Dendritic cell treated with granulocyte-macrophage colony-stimulating factor and Interleukin-4, amounts not matched to agents 40 ng/mL and 50 ng/mL, for 4 days (primary cell): ENCODE measurements at regions of chr3 and their contacts with region 1.

Region 1: DNA sequence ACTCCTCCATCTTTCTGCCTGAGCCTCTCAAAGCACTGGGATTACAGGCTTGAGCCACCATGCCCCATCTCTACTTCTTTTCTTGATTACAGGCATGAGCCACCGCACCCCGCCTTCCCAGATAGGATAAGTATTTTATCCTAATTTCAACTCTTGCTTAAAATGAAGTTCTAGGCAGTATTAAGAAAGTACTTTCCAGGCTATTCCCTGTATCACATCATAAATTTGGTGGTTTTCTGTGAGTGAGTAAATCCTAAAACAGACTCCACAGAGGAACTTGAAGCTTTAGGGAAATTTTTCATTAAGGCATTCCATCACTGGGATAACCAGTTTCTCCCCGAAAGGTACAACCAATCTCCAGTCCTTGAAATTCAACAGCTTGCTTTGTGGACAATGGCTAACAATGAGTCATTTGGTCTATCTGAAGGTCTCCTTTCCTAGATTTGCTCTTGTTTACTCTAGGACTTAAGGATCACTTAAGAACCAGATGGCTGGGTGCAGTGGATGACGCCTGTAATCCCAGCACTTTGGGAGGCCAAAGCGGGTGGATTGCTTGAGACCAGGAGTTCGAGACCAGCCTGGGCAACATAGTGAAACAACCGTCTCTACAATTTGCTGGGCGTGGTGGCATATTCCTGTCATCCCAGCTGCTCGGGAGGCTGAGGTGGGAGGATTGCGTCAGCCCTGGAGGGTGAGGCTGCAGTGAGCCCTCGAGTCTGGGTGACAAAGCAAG is 49.7 kb upstream of the SKIL start:
- H3K4me3 Mint-ChIP-seq: no peak overlapping the region
- H3K27ac Mint-ChIP-seq: no peak overlapping the region
- H3K4me1 Mint-ChIP-seq: peaks cover 5% of the 10 kb centered on the region
- H3K27me3 Mint-ChIP-seq: no peaks in the 10 kb centered on the region

Region 2: DNA sequence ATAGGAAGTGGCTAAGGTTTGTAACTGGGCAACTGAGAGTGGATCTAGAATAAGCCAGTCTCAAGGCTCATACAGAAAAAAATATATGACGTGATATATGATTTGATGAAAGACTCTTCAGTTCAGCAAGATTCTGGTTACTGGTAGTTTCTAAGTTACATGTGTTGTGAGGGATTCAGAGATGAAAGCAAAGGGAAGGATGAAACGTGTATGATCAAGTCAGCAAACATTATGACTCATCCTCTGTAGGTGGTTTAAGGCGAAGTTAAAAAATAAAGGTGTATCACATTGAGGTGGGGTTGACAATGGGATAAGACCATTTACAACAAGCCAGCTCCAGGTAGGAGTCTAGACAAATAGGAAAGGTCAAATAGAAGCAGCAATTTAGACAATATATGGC is 559.2 kb before region 1 on chr3:
- intact Hi-C with region 1: no loop called
- H3K4me3 Mint-ChIP-seq: no peak overlapping the region
- H3K27ac Mint-ChIP-seq: no peak overlapping the region
- H3K4me1 Mint-ChIP-seq: no peaks in the 10 kb centered on the region
- H3K27me3 Mint-ChIP-seq: peaks cover 10% of the 10 kb centered on the region

Region 3: GRCh38 chr3:170144437-170144843 is 163.4 kb before region 1 on chr3:
- intact Hi-C with region 1: no loop called
- H3K4me3 Mint-ChIP-seq: no peak overlapping the region
- H3K27ac Mint-ChIP-seq: no peak overlapping the region
- H3K4me1 Mint-ChIP-seq: peaks cover 5% of the 10 kb centered on the region
- H3K27me3 Mint-ChIP-seq: no peaks in the 10 kb centered on the region

Region 4: DNA sequence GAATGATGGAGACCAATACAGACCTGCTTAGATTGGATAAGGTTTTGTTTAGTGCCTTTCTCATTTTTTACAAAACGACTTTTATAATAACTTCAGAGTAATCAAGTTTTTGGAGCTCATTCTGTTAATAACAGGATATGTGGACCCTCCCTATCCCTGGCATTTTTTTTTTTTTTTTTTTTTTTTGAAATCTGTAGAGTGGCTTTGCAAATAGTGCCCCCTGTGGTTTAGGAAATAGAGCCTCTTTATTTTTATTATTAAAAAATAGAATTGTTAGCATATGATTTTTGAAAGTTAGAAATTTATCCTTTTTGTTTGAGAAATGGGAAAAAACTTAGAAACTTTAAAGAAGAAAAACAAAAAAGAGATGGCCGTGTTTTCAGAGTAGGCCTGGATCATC is 61.1 kb after region 1 on chr3:
- intact Hi-C with region 1: loop called (anchors 5 kb)
- H3K4me3 Mint-ChIP-seq: no peak overlapping the region
- H3K27ac Mint-ChIP-seq: no peak overlapping the region
- H3K4me1 Mint-ChIP-seq: peaks cover 22% of the 10 kb centered on the region
- H3K27me3 Mint-ChIP-seq: no peaks in the 10 kb centered on the region

Region 5: GRCh38 chr3:170414202-170414663 is 106.4 kb after region 1 on chr3:
- intact Hi-C with region 1: loop called (anchors 2 kb)
- H3K4me3 Mint-ChIP-seq: no peak overlapping the region
- H3K27ac Mint-ChIP-seq: no peak overlapping the region
- H3K4me1 Mint-ChIP-seq: peaks cover 11% of the 10 kb centered on the region
- H3K27me3 Mint-ChIP-seq: peaks cover 35% of the 10 kb centered on the region

Region 6: DNA sequence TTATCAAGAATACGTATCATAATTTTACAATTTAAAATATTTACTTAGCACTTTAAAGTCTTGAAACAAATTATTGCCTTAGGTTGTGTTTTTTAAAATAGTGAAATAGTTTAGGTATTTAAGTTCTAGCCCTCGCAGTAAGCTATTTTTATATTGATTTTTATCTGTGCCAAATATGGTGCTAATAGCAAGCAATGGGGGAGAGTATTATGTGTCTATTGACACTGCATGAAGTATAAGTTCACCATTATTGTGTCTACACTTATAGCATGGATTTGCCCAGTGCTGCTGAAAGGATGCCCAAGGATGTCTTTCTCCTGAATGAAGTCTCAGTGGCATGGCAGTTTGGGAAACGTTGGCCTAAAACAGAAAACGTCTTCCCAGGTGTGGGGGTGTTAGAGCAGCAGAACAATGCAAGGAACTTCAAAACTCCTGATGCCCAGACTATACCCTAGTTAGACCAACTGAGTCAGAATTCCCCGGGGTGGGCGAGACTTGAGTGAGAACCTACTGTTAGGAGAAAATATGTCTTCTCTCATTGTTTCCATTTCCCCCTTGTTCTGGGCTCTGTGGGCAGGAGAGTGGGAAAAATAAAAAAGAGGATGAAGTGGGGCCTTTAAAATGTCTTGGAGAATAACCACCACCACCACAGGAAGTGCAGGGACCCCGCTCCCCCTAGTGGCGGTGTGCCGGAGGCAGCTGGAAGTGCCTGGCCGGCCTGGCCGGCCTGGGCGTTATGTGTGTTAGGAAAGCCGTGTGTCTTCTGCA is 382.2 kb after region 1 on chr3:
- intact Hi-C with region 1: loop called (anchors 5 kb)
- H3K4me3 Mint-ChIP-seq: no peak overlapping the region
- H3K27ac Mint-ChIP-seq: no peak overlapping the region
- H3K4me1 Mint-ChIP-seq: no peaks in the 10 kb centered on the region
- H3K27me3 Mint-ChIP-seq: no peaks in the 10 kb centered on the region

Region 7: DNA sequence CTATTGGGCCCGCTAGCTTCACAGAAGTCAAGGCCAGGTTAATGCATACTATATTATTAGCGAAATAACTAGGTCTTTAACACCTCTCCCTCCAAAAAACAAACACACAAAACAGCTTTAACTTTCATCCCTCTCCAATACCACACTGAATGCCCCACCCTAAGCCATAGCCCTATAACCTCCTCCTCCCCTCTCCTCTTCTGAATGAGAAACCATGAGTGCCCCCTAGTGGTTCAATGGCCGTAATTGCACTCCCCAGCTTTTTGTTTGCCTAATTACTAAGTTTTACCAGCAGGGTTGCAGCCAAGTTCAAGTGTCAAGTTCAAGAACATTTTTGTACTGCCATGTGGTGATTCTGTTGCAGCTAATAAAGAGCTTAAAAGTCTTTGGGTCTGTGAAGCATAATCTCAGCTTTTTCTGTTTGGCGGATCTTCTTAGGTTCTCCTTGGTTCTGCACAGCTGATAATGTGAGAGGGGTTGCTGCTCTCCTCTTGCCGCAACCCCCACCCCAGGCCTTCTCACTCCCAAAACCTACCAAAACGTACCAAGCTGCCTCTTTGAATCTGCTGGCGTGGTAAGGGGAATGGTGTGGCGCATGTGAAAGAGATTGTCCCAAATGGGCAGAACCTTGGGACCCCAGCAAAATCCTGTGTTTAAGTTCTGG is 504.2 kb after region 1 on chr3:
- intact Hi-C with region 1: loop called (anchors 1 kb)
- H3K4me3 Mint-ChIP-seq: no peak overlapping the region
- H3K27ac Mint-ChIP-seq: no peak overlapping the region
- H3K4me1 Mint-ChIP-seq: peaks cover 5% of the 10 kb centered on the region
- H3K27me3 Mint-ChIP-seq: no peaks in the 10 kb centered on the region